ENCODE measurements at regions of chr11 and their contacts with region 1.

Region 1: DNA sequence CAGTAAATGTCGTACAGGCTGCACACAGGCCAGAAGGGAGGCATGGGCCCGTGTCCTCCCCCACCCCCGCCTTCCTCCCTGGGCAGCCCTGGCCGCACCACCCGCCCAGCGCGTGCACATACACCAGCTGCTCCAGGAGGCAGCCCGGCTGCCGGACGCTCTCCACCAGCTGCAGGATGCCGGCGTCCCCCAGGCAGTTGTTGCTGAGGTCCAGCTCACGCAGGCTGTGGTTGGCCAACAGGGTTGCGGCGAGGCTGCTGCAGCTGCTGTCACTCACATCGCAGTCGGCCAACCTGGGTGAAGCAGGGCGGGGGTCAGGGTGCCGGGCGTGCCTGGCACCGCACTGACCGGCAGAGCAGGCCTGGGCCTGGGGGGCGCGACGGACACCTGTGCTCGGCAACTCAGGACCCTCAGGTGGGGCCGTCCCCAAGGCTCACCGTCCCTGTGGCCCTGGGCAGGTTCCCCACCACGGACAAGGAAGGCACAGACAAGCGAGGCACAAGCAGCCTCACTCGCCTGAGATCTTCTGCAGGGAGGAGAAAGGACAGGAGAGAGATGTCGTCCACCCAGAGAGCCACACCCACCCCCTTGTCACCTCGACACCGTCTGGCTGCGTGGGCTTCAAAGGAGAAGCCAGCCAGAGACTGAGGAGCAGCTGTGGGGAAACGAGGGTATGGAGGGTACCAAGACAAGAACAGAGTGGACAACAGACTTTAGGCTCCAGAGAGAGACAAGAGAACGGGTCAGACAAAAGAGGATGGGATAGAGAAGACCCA is 12.1 kb downstream of the RNH1 start:
- DNase-seq: no peak
- H3K4me3 ChIP-seq: no peak overlapping the region
- H3K27ac ChIP-seq: no peak overlapping the region
- H3K4me1 ChIP-seq: no peaks in the 10 kb centered on the region
- H3K27me3 ChIP-seq: no peaks in the 10 kb centered on the region
- CTCF ChIP-seq: no peak
- POLR2A ChIP-seq: no peak

Region 2: DNA sequence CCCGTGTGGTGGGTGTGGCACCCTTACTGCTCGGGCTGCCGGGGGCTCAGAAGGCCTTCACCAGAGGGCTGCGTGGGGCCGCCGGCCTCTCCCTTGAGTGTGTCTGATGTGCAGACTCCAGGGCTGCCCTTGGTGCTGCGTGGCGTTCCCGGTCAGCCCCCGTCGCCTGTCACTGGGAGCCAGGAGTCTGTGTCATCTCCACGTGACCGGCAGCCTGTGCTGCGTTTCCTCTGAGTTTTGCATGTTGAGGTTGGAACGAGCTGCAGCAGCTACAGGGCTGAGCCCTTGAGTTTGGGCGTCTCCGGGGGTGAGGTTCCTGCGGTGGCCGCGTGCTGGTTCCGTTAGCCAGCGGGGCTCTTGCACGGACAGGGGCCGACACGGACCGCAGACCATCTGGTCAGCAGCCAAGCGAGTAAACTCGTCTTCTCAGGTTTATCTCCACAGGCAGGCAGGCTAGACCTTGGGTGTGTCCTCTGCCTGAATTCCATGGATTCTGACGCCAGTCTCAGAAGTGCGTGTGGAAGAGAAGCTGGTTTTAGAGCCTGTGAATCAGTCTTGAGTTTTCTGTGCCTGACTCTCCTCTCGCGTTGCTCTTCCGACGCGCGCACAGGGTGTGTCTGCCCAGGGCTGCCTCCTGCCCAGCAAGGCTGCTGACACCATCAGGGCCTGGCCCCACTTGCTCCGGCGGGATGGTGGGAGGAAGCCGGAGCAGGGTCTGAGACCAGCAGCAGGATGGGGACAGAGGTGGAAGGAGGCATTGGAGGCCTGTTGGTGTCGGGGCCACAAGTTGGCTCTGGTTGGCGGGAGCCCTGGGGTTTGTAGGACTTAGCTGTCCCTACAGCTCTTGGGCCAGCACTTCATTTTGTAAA is 34.4 kb before region 1 on chr11:
- intact Hi-C with region 1: loop called (anchors 5 kb)
- DNase-seq: no peak
- H3K4me3 ChIP-seq: no peak overlapping the region
- H3K27ac ChIP-seq: peak overlapping the region in 1 of 4 donors; percentile 55
- H3K4me1 ChIP-seq: peaks cover 0 to 6% (median 0%) of the 10 kb centered on the region in 3 donors
- H3K27me3 ChIP-seq: no peaks in the 10 kb centered on the region
- CTCF ChIP-seq: no peak
- POLR2A ChIP-seq: no peak

Region 3: GRCh38 chr11:535519-536454 is 40.8 kb after region 1 on chr11 and contains the start of gene HRAS:
- intact Hi-C with region 1: no loop called
- DNase-seq: peak; percentile 69
- H3K4me3 ChIP-seq: peak within 1 kb of the TSS; percentile 89 to 98 (median 96)
- H3K27ac ChIP-seq: peak within 1 kb of the TSS; percentile 94 to 98 (median 97)
- H3K4me1 ChIP-seq: peaks cover 40 to 61% (median 47%) of the 10 kb centered on the region in 3 donors
- H3K27me3 ChIP-seq: no peaks in the 10 kb centered on the region
- CTCF ChIP-seq: no peak
- POLR2A ChIP-seq: peak in 3 of 4 donors; percentile 66 to 88 (median 71)
- total RNA-seq, gene HRAS: 56.7 to 106 (median 85.2) TPM

Region 4: DNA sequence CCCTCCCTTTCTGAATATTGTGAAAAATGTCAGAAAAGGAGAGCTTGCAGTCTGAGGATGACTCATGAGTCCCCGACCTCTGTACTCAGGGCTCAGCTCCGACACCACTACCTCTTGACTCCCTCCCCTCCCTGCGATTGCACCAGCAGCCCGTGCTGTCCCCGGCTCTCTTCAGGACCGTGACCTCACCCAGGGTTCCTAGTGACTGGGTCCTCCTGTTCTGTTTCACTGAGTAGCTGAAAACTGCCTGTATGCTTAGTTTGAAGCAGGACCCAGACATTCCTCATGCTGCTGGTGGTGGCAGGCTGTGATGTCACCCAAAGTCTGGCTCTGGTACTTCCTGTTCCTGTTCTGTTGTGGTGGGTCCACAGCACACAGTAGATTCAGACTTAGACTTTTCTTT is 93.0 kb after region 1 on chr11:
- intact Hi-C with region 1: no loop called
- DNase-seq: no peak
- H3K4me3 ChIP-seq: no peak overlapping the region
- H3K27ac ChIP-seq: peak overlapping the region in 2 of 4 donors; percentile 54 to 58
- H3K4me1 ChIP-seq: no peaks in the 10 kb centered on the region
- H3K27me3 ChIP-seq: no peaks in the 10 kb centered on the region
- CTCF ChIP-seq: no peak
- POLR2A ChIP-seq: no peak

Region 5: DNA sequence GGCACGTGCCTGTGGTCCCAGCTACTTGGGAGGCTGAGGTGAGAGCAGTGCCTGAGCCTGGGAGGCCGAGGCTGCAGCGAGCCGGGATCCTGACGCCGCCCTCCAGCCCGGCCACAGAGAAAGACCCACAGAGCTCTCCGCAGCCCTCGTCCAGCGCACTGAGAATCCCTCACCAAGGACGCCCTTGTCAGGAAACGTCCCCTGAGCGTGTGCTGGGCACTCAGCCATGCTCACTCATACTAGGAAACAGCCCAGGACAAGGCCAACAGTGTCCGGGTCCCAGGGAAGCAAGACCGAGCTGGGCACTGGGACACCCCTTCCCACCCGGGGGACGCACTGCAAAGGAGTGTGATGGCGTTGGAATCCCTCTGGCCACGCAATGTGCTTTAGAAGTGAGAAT is 185.5 kb after region 1 on chr11:
- intact Hi-C with region 1: no loop called
- DNase-seq: no peak
- H3K4me3 ChIP-seq: no peak overlapping the region
- H3K27ac ChIP-seq: no peak overlapping the region
- H3K4me1 ChIP-seq: no peaks in the 10 kb centered on the region
- H3K27me3 ChIP-seq: no peaks in the 10 kb centered on the region
- CTCF ChIP-seq: no peak
- POLR2A ChIP-seq: no peak

Measured in esophagus squamous epithelium (tissue), 5 donors.